ENCODE measurements at regions of chr1 and their contacts with region 1.

Region 1: GRCh38 chr1:39196244-39197215 is 8.0 kb upstream of the MACF1 start:
- DNase-seq: peak; percentile 41
- CTCF ChIP-seq: no peak

Region 2: GRCh38 chr1:39098546-39099250 is 97.8 kb before region 1 on chr1:
- CTCF ChIA-PET with region 1: interaction called, 127 read pairs
- POLR2A ChIA-PET with region 1: no interaction called
- DNase-seq: peak; percentile 81
- CTCF ChIP-seq: peak; percentile 84

Region 3: DNA sequence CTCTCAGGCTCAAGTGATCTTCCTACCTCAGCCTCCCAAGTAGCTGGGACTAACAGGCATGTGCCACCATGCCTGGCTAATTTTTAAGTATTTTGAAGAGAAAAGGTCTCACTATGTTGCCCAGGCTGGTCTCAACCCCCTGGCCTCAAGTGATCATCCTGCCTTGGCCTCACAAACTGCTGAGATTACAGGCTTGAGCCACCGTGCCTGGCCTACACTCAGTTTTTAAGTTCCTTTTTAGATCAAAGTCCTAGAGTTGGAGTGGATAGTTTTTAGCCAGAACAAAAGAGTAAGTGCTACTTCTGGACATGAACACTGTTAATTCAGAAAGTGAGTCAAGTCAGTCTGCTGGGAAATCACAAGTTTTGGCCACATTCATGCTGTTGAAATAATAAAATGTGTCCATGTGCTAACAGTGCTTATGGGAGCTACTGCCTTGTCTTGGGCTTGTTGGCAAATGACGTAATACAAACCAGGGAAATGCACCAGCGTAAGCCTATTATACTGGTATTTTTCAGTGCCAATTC is 86.1 kb before region 1 on chr1:
- CTCF ChIA-PET with region 1: interaction called, 18 read pairs
- POLR2A ChIA-PET with region 1: no interaction called
- DNase-seq: no peak
- CTCF ChIP-seq: no peak

Region 4: GRCh38 chr1:39165049-39165448 is 31.5 kb before region 1 on chr1:
- CTCF ChIA-PET with region 1: interaction called, 19 read pairs
- POLR2A ChIA-PET with region 1: no interaction called
- DNase-seq: no peak
- CTCF ChIP-seq: no peak

Region 5: GRCh38 chr1:39183503-39184353 is 12.8 kb before region 1 on chr1:
- CTCF ChIA-PET with region 1: interaction called, 344 read pairs
- POLR2A ChIA-PET with region 1: interaction called, 3 read pairs
- DNase-seq: no peak
- CTCF ChIP-seq: peak; percentile 29

Region 6: GRCh38 chr1:39258146-39258924 is 61.8 kb after region 1 on chr1:
- CTCF ChIA-PET with region 1: interaction called, 371 read pairs
- POLR2A ChIA-PET with region 1: interaction called, 3 read pairs
- DNase-seq: peak; percentile 67
- CTCF ChIP-seq: peak; percentile 76

Region 7: DNA sequence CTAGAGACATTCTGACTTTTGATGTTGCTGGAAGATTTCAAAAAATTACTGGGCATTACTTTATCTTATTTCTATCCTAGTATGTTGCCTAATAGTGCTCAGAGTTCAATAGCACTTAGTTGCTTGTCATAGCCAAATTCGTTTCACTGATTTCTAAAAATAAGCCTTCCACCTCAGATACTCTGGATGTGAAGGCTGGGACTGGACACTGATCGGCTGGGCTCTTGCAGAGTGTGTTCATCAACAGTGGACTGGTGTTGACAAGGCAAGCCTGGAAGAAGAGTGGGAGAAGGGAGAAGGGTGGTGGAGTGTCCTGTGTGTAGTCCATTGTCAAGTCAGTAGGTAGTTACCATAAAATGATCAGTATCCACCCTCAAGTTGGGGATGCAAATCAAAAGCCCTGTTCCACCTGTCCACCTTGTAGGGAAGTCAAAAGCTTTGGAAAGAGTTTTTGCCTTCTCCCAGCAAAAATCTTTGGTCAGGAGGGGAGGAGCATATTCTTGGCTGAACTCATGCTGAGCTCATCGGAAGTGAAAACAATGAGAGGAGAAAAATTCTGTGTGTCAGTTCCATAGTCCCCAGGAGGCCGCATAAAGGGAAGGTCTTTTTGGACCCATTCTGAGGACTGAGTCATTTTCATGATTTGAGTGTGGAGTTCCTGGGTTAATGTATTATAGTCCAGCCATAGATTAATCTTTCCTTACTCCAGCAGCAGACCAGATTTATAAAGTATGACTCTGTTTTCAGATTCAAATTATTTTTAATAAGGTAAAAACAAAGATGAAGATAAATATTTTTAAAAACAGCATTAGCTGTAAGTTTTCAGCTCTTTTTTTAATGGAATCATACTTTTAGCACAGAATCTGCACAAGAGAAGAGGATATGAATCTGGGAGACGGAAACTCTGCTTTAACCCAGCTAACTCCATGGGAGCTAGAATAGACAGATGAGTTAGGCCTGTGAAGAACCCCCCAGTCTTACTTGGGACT is 195.5 kb after region 1 on chr1:
- CTCF ChIA-PET with region 1: no interaction called
- POLR2A ChIA-PET with region 1: no interaction called
- DNase-seq: no peak
- CTCF ChIP-seq: no peak

Region 8: GRCh38 chr1:39538588-39539465 is 342.3 kb after region 1 on chr1:
- CTCF ChIA-PET with region 1: interaction called, 12 read pairs
- POLR2A ChIA-PET with region 1: no interaction called
- DNase-seq: peak; percentile 82
- CTCF ChIP-seq: peak; percentile 77